ENCODE measurements at regions of chrX and their contacts with region 1.

Region 1: DNA sequence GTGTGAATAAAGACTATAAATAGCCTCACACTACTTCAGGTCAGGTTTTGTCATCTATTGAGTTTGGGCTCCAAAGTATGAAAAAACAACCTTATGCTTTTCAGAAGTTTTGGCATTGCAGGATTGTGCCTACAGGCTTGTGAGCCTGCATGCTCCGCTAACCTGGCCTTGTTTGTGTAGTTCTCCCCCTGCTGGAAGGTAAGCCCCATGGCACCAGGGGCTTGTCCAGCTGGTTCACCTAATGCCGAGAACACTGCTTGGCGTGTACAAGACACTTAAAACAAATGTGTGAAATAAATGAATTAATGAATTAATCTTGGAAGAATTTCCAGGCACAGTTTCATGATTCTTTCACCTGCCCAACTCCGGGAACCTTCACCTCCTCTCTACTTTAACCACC is 1.8 kb upstream of the HSD17B10 start:
- DNase-seq: peak; percentile 71
- ATAC-seq: peak; percentile 73
- H3K4me3 Mint-ChIP-seq: no peak overlapping the region
- H3K27ac Mint-ChIP-seq: no peak overlapping the region
- H3K4me1 Mint-ChIP-seq: peaks cover 38% of the 10 kb centered on the region
- H3K27me3 Mint-ChIP-seq: peaks cover 3% of the 10 kb centered on the region
- CTCF ChIP-seq: peak; percentile 62

Region 2: DNA sequence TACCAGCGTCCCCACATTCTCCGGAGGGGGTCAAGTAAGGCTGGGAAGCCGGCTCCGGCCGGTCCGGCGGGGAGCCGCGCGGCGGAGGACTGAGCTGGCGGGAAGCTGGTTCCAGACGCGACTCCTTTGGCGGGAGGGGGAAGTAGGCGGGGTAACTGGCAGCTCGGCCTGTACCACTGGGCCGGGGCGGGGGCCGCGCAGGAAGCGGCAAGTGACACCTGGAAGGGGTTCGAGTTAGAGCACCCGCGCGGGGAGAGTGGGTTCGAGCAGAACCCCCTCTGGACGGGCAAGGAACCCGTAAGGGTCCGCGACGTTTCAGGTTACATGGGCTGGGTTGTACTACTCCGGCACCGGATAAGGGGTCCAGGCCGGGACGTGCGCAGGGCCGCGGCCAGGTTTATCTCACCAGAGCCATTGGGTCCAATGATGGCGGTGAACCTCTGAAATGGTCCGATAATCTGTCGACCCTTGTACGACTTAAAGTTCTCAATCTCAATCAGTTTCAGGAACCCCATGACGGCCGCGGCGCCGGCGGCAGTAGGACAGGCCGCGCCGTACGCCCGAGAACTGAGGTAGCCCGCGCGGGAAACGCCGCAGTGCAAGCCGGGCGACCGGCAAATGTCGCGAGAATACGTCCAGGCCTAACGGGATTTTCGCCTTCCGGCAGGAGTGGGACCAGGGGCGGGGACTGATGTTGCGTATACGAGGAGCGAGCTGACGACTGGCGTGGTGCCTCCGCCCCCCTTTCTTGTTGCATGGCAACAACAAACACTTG is 13.7 kb before region 1 on chrX and contains the start of gene SMC1A:
- CTCF ChIA-PET with region 1: interaction called, 27 read pairs
- POLR2A ChIA-PET with region 1: interaction called, 9 read pairs
- intact Hi-C with region 1: no loop called
- DNase-seq: peak; percentile 96
- ATAC-seq: peak; percentile 94
- H3K4me3 Mint-ChIP-seq: peak within 1 kb of the TSS; percentile 94
- H3K27ac Mint-ChIP-seq: peak within 1 kb of the TSS; percentile 96
- H3K4me1 Mint-ChIP-seq: peaks cover 23% of the 10 kb centered on the region
- H3K27me3 Mint-ChIP-seq: no peaks in the 10 kb centered on the region
- CTCF ChIP-seq: no peak
- total RNA-seq, gene SMC1A: 151 to 154 TPM

Region 3: GRCh38 chrX:53511322-53511721 is 75.3 kb after region 1 on chrX:
- CTCF ChIA-PET with region 1: no interaction called
- POLR2A ChIA-PET with region 1: no interaction called
- intact Hi-C with region 1: no loop called
- DNase-seq: no peak
- ATAC-seq: no peak
- H3K4me3 Mint-ChIP-seq: no peak overlapping the region
- H3K27ac Mint-ChIP-seq: no peak overlapping the region
- H3K4me1 Mint-ChIP-seq: no peaks in the 10 kb centered on the region
- H3K27me3 Mint-ChIP-seq: no peaks in the 10 kb centered on the region
- CTCF ChIP-seq: no peak